Mammary epithelial cell (primary cell): ENCODE measurements at regions of chr20 and their contacts with region 1.

Region 1: DNA sequence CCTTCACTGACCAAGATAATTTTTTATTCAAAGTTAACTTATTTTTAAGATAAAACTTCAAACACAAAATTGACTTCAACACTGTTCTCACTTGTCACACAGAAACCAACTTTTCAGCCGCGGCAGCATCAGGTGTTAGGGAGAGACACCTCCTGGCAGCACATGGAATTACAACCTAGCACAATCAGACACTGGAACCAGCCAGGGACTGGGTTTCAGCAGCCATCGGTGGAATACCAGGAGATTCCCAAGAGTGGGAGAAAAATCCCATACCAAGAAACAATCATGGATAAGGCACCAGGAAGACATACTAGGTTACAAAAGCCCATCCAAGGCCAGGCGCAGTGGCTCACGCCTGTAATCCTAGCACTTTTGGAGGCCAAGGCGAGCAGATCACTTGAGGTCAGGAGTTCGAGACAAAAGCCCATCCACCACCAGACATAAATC is 70.0 kb downstream of the SNX5 start:
- DNase-seq: peak; percentile 53
- H3K4me3 ChIP-seq: no peak overlapping the region
- H3K27ac ChIP-seq: no peak overlapping the region
- H3K4me1 ChIP-seq: peaks cover 34% of the 10 kb centered on the region
- H3K27me3 ChIP-seq: no peaks in the 10 kb centered on the region
- CTCF ChIP-seq: peak; percentile 85 to 96

Region 2: DNA sequence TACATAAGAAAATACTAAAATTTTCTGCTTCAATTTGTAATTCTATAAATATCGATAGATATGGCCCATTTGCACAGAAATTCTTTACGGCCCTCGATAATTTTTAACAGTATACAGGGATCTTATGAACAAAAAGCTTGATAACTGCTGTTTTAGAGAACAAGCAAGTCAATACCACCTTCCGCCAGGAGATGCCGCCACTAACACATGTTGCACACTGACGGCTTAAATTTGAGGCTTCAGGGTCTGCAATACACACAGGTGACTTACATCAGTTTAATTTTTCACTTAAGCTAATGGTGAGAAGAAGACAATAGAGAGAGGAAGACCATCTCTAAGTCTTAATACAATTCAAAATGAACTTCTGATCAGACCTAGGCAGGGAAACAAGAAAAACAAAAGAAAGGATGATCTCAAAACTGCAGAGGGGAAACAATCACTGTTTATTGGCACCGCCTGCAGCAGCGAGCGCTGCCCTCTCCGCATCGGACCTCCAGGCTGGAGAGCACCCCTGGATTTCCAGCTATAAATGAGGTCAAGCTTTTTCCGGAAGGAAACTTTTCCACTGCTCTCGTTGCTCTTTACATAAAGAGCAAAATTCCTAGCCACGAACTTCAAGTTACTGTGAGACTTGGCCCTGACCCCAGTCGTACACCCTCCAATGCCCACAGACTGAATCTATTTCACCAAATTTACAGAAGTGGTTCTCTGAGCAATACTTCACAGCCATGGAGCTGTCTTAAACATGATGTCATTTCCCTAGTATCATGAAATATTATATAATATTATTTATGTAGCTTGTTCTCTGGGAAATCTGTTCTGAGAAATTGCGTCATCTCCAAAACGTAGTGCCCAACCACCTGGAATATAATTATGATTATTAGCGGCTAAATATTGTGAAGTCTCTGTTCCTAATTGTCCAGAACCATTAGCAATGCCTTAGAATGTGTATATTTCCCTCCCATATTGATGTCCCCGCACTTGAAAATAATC is 1096.4 kb before region 1 on chr20:
- CTCF ChIA-PET with region 1: interaction called, 3 read pairs
- dilution Hi-C with region 1: no loop called
- in situ Hi-C with region 1: no loop called
- intact Hi-C with region 1: loop called (anchors 5 kb)
- DNase-seq: peak; percentile 9
- H3K4me3 ChIP-seq: no peak overlapping the region
- H3K27ac ChIP-seq: no peak overlapping the region
- H3K4me1 ChIP-seq: no peaks in the 10 kb centered on the region
- H3K27me3 ChIP-seq: peaks cover 2% of the 10 kb centered on the region
- CTCF ChIP-seq: peak; percentile 88 to 96

Region 3: GRCh38 chr20:17611540-17612286 is 286.9 kb before region 1 on chr20:
- CTCF ChIA-PET with region 1: no interaction called
- dilution Hi-C with region 1: no loop called
- in situ Hi-C with region 1: no loop called
- intact Hi-C with region 1: loop called (anchors 1 kb)
- DNase-seq: peak; percentile 70
- H3K4me3 ChIP-seq: no peak overlapping the region
- H3K27ac ChIP-seq: no peak overlapping the region
- H3K4me1 ChIP-seq: peaks cover 29% of the 10 kb centered on the region
- H3K27me3 ChIP-seq: no peaks in the 10 kb centered on the region
- CTCF ChIP-seq: peak in 1 of 2 donors; percentile 75

Region 4: GRCh38 chr20:17654649-17655285 is 243.8 kb before region 1 on chr20:
- CTCF ChIA-PET with region 1: no interaction called
- dilution Hi-C with region 1: no loop called
- in situ Hi-C with region 1: no loop called
- intact Hi-C with region 1: loop called (anchors 1 kb)
- DNase-seq: no peak
- H3K4me3 ChIP-seq: no peak overlapping the region
- H3K27ac ChIP-seq: no peak overlapping the region
- H3K4me1 ChIP-seq: peaks cover 6% of the 10 kb centered on the region
- H3K27me3 ChIP-seq: no peaks in the 10 kb centered on the region
- CTCF ChIP-seq: peak; percentile 52 to 57

Region 5: GRCh38 chr20:17747431-17747867 is 151.1 kb before region 1 on chr20:
- CTCF ChIA-PET with region 1: no interaction called
- dilution Hi-C with region 1: no loop called
- in situ Hi-C with region 1: no loop called
- intact Hi-C with region 1: loop called (anchors 5 kb)
- DNase-seq: peak; percentile 77
- H3K4me3 ChIP-seq: no peak overlapping the region
- H3K27ac ChIP-seq: no peak overlapping the region
- H3K4me1 ChIP-seq: peaks cover 12% of the 10 kb centered on the region
- H3K27me3 ChIP-seq: no peaks in the 10 kb centered on the region
- CTCF ChIP-seq: peak in 1 of 2 donors; percentile 6

Region 6: DNA sequence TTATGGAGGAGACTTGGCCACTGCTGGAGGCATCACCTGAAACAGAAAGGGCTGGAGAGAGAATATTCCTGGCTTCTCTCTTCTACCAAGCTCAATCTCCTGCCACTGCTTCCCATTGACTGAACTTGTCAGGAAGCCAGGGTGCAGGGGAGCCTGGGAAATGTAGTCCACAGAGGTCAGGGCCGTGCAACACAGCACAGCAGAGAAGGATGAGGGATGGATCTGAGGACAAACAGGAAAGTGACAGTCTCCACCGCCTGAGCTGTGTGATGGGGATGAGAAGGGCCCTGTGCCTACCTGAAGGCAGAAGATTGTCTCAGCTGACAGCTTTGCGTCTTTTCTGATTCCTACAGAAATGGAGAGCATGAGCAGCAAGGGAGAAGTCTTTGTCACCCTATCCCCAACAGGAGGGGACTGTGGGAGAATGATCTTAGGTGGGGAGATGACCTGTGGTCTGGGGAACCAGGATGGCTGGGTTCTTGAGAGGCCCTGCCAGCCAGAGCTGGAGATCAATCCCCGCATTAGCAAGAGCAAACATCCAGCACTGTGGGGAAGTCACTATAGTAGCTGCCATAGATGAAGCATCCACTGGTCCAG is 44.2 kb before region 1 on chr20:
- CTCF ChIA-PET with region 1: interaction called, 4 read pairs
- dilution Hi-C with region 1: no loop called
- in situ Hi-C with region 1: no loop called
- intact Hi-C with region 1: loop called (anchors 2 kb)
- DNase-seq: peak; percentile 27
- H3K4me3 ChIP-seq: no peak overlapping the region
- H3K27ac ChIP-seq: no peak overlapping the region
- H3K4me1 ChIP-seq: peaks cover 37% of the 10 kb centered on the region
- H3K27me3 ChIP-seq: no peaks in the 10 kb centered on the region
- CTCF ChIP-seq: no peak

Region 7: GRCh38 chr20:17995967-17996819 is 97.6 kb after region 1 on chr20:
- CTCF ChIA-PET with region 1: no interaction called
- dilution Hi-C with region 1: no loop called
- in situ Hi-C with region 1: no loop called
- intact Hi-C with region 1: loop called (anchors 5 kb)
- DNase-seq: peak; percentile 55
- H3K4me3 ChIP-seq: no peak overlapping the region
- H3K27ac ChIP-seq: no peak overlapping the region
- H3K4me1 ChIP-seq: peaks cover 14% of the 10 kb centered on the region
- H3K27me3 ChIP-seq: no peaks in the 10 kb centered on the region
- CTCF ChIP-seq: peak; percentile 98 to 100

Region 8: GRCh38 chr20:18904624-18905023 is 1006.1 kb after region 1 on chr20:
- CTCF ChIA-PET with region 1: no interaction called
- dilution Hi-C with region 1: no loop called
- in situ Hi-C with region 1: no loop called
- intact Hi-C with region 1: no loop called
- DNase-seq: no peak
- H3K4me3 ChIP-seq: no peak overlapping the region
- H3K27ac ChIP-seq: no peak overlapping the region
- H3K4me1 ChIP-seq: no peaks in the 10 kb centered on the region
- H3K27me3 ChIP-seq: no peaks in the 10 kb centered on the region
- CTCF ChIP-seq: peak; percentile 45 to 74